Left colon (tissue), 2 donors: ENCODE measurements at regions of chr9 and their contacts with region 1.

Region 1: DNA sequence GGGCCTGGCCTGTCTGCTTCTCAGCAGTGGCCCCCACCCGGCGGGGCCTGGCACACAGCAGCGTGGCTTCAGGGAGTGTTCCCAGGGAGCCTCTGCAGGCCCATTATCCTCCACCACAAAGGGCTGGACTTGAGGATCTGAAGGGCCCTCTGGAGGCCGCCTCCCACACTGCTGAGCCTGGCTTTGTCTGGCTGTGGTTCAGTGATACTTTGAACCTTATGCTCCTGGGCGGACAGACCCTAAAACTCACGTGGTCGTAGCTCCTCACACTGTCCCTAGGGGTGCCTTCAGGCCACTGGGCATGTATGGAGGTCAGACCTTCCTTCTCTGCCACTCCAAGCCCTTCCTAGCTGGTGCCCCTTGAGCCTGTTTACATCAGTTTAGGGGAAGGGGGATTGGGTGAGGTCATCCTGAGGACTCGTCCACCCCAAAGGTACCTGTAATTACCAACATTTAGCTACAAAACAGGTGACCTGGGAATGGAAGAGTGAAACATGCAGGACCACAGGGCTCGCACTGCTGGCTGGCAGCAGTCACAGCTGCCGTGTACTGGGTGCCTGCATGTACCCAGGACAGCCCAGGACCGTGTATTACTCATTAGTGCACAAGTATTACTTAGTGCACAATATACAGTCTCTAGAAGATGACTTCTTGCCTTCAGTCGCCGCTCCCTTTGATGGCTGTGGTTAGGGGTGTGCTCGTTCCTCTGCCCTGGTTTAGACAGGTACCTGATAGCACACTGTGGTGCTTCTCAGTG is 8.5 kb downstream of the GRHPR start:
- DNase-seq: peak in 1 of 2 donors; percentile 39
- ATAC-seq: peak; percentile 88

Region 2: GRCh38 chr9:37371565-37372464 is 59.2 kb before region 1 on chr9:
- intact Hi-C with region 1: loop called in 1 of 2 experiments (anchors 10 kb)
- DNase-seq: no peak
- ATAC-seq: no peak